ENCODE measurements at regions of chr13 and their contacts with region 1.

Region 1: DNA sequence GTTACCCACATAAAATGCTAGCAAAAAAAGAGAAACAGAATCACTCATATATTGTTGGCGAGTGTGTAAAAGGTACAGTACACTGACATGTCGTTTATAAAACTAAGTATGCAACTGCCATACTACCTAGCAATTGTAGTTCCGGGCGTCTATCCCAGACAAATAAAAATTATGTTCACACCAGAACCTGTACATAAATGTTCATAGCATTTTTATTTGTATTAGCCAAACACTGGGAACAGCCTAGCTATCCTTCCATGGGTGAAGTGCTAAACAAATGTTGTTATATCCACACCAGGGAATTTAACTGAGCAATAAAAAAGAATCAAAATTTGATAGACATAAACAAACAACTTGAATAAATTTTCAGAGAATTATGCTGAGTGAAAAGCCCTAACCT is 28.9 kb upstream of the POSTN start:
- DNase-seq: no peak
- H3K4me3 Mint-ChIP-seq: no peak overlapping the region
- H3K27ac Mint-ChIP-seq: no peak overlapping the region
- H3K4me1 Mint-ChIP-seq: no peaks in the 10 kb centered on the region
- H3K27me3 Mint-ChIP-seq: no peaks in the 10 kb centered on the region
- CTCF ChIP-seq: no peak

Region 2: GRCh38 chr13:37416291-37417059 is 211.0 kb before region 1 on chr13:
- CTCF ChIA-PET with region 1: no interaction called
- intact Hi-C with region 1: no loop called
- DNase-seq: no peak
- H3K4me3 Mint-ChIP-seq: no peak overlapping the region
- H3K27ac Mint-ChIP-seq: no peak overlapping the region
- H3K4me1 Mint-ChIP-seq: no peaks in the 10 kb centered on the region
- H3K27me3 Mint-ChIP-seq: no peaks in the 10 kb centered on the region
- CTCF ChIP-seq: no peak

Region 3: DNA sequence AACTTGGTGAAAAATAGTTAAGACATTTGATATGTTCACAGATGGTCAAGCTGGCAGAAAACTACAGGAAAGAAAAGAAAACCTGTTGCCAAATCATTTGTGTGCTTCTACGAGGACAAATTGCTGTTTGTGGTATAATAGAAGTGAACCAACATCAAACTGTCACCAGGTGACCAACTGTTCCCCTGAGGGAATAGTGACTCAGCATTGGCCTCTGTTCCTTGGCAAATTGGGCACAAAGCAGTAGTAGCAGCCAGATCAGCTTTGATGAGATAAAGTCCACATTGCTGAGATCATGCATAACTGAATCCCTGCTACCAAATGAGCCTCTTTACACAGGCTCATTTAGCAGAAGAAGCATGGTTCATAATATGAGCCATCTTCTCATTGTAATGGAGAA is 132.4 kb before region 1 on chr13:
- CTCF ChIA-PET with region 1: interaction called, 10 read pairs
- intact Hi-C with region 1: no loop called
- DNase-seq: no peak
- H3K4me3 Mint-ChIP-seq: no peak overlapping the region
- H3K27ac Mint-ChIP-seq: no peak overlapping the region
- H3K4me1 Mint-ChIP-seq: no peaks in the 10 kb centered on the region
- H3K27me3 Mint-ChIP-seq: no peaks in the 10 kb centered on the region
- CTCF ChIP-seq: no peak

Region 4: DNA sequence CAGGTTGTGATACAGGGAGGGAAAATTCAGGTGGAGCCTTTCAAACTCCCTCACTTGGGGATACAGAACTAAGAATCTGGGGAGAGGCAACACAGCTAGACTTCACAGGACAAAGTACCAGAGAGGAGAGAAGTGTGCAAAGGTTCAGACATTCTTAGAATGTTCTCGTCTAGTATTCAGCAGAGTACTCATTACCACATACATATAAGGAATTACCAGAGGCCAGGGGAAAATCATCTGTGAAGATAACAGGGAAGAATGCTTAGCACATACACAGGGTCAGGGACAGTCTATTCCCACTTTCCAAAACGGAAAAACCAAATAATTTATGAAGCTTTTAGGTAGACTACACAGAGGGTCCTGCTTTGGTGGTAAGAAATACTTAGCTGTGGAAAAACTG is 184.0 kb after region 1 on chr13:
- CTCF ChIA-PET with region 1: no interaction called
- intact Hi-C with region 1: no loop called
- DNase-seq: no peak
- H3K4me3 Mint-ChIP-seq: no peak overlapping the region
- H3K27ac Mint-ChIP-seq: no peak overlapping the region
- H3K4me1 Mint-ChIP-seq: no peaks in the 10 kb centered on the region
- H3K27me3 Mint-ChIP-seq: no peaks in the 10 kb centered on the region
- CTCF ChIP-seq: no peak